ENCODE measurements at regions of chr12 and their contacts with region 1.

Region 1: DNA sequence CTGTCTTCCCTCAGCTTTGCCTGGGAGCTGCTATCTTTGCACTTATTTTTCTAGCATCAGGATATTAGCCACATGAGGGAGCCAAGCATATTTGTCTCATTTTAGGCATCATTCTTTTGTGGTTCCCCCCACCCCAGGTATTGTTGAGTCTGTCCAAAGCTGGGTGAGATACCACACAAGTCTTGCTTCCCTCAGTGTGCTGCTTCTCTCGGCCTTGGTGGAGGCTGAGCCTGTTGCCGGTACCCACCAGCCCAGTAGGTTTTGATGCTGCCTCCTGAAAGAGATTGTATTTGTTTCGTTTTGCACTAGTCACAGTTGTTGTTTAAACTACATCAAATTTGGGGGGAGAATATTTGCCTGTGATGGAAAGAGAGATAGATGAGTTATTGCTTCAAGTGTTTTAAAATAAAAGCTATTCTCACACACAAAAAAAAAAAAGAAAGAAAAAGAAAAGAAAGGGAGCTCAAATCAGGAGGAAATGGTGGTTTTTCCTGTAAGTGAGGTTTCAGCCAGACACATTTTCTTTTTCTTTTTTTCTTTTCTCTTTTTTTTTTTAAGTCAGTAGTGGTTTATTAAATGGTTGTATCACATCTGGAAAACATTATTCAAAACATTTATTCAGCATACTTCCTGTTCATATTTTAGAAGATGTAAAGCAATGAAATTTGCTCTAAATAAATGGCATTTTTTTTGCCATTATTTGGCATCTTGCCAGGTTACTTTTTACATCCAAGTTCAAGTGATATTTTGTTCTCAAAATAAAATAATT is 58.5 kb downstream of the SLC4A8 start:
- DNase-seq: no peak
- ATAC-seq: no peak
- H3K4me3 Mint-ChIP-seq: no peak overlapping the region
- H3K27ac Mint-ChIP-seq: no peak overlapping the region
- H3K4me1 Mint-ChIP-seq: peaks cover 23% of the 10 kb centered on the region
- H3K27me3 Mint-ChIP-seq: no peaks in the 10 kb centered on the region
- CTCF ChIP-seq: no peak

Region 2: DNA sequence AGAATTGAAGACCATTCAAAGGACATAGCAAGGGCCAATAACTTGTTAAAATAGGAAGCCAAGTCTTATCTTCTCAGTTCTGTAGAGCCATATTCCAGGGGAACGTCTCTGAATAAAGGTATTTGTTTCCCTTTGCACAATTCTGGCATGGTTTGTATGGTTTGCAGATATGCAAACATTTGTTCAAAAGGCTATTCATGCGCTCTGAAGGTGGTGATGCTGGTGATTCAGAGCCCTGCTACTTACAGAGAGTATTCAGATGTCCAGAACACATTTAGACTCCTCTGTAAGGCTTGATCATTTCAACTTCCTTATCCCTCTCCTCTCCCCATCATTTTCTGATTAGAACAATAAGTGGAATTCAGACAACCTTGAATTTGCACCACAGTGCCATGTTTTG is 22.6 kb before region 1 on chr12:
- CTCF ChIA-PET with region 1: no interaction called
- POLR2A ChIA-PET with region 1: no interaction called
- intact Hi-C with region 1: no loop called
- DNase-seq: no peak
- ATAC-seq: no peak
- H3K4me3 Mint-ChIP-seq: no peak overlapping the region
- H3K27ac Mint-ChIP-seq: no peak overlapping the region
- H3K4me1 Mint-ChIP-seq: no peaks in the 10 kb centered on the region
- H3K27me3 Mint-ChIP-seq: no peaks in the 10 kb centered on the region
- CTCF ChIP-seq: no peak

Region 3: GRCh38 chr12:51517800-51518199 is 34.7 kb after region 1 on chr12:
- CTCF ChIA-PET with region 1: no interaction called
- POLR2A ChIA-PET with region 1: no interaction called
- intact Hi-C with region 1: loop called (anchors 2 kb)
- DNase-seq: no peak
- ATAC-seq: no peak
- H3K4me3 Mint-ChIP-seq: no peak overlapping the region
- H3K27ac Mint-ChIP-seq: no peak overlapping the region
- H3K4me1 Mint-ChIP-seq: no peaks in the 10 kb centered on the region
- H3K27me3 Mint-ChIP-seq: no peaks in the 10 kb centered on the region
- CTCF ChIP-seq: no peak